ENCODE measurements at regions of chr6 and their contacts with region 1.

Region 1: DNA sequence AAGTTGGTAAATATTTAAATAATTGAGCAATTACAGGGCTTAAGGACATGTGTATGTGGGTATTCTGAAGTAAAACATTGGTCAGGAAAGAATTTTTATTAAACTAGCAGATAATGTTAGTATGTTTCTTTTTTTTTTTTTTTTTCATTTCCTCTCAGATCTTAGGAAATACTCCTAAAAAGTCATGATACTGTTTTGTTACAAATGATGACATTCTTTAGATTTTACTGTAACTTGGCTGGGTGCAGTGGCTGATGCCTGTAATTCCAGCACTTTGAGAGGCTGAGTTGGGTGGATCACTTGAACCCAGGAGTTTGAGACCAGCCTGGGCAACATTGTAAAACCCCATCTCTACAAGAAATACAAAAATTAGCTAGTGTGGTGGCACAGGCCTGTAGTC is 41.5 kb downstream of the CDC40 start:
- DNase-seq: peak; percentile 7
- ATAC-seq: peak; percentile 60
- H3K4me3 ChIP-seq: no peak overlapping the region
- H3K27ac ChIP-seq: peak overlapping the region; percentile 78
- H3K4me1 ChIP-seq: peaks cover 5% of the 10 kb centered on the region
- H3K27me3 ChIP-seq: no peaks in the 10 kb centered on the region
- CTCF ChIP-seq: no peak
- POLR2A ChIP-seq: no peak
- RAD21 ChIP-seq: no peak

Region 2: DNA sequence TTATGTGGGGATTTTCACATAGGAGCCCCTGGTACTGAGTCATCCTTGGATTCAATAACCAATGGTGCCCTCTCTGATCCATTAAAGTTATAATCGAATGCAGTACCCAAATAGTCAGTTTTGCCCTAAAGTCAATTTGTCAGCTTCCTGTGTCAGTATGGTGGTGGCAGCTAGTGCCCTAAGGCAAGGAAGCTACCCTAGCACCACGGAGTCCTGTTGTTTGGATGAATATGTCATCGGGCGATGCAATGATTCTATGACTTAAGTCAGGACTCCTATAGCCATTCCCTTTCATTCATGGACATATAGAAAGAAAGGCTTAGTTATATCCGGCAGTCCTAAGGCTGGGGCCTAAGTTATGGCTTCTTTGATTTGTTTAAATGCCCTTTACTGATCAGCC is 331.7 kb before region 1 on chr6:
- CTCF ChIA-PET with region 1: no interaction called
- POLR2A ChIA-PET with region 1: no interaction called
- dilution Hi-C with region 1: no loop called
- in situ Hi-C with region 1: no loop called
- intact Hi-C with region 1: no loop called
- DNase-seq: no peak
- ATAC-seq: no peak
- H3K4me3 ChIP-seq: no peak overlapping the region
- H3K27ac ChIP-seq: no peak overlapping the region
- H3K4me1 ChIP-seq: no peaks in the 10 kb centered on the region
- H3K27me3 ChIP-seq: peaks cover 4% of the 10 kb centered on the region
- CTCF ChIP-seq: no peak
- POLR2A ChIP-seq: no peak
- RAD21 ChIP-seq: no peak

Region 3: DNA sequence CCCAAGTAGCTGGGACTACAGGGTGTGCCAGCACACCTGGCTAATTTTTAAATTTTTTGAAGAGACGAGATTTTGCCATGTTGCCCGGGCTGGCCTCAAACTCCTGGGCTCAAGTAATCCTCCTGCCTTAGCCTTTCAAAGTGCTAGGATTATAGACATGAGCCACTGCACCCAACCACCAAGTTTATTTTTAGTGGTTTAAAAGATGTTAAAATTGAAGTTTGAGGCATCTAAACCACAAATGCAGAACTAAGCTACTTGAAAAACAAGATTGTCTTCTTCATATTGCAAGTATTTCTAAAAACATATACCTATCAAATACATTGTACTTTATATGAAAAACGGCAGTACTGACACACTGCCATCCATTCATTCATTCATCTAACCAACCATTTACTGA is 73.9 kb before region 1 on chr6:
- CTCF ChIA-PET with region 1: no interaction called
- POLR2A ChIA-PET with region 1: no interaction called
- dilution Hi-C with region 1: no loop called
- in situ Hi-C with region 1: no loop called
- intact Hi-C with region 1: no loop called
- DNase-seq: no peak
- ATAC-seq: no peak
- H3K4me3 ChIP-seq: no peak overlapping the region
- H3K27ac ChIP-seq: no peak overlapping the region
- H3K4me1 ChIP-seq: no peaks in the 10 kb centered on the region
- H3K27me3 ChIP-seq: no peaks in the 10 kb centered on the region
- CTCF ChIP-seq: no peak
- POLR2A ChIP-seq: no peak
- RAD21 ChIP-seq: no peak

Region 4: DNA sequence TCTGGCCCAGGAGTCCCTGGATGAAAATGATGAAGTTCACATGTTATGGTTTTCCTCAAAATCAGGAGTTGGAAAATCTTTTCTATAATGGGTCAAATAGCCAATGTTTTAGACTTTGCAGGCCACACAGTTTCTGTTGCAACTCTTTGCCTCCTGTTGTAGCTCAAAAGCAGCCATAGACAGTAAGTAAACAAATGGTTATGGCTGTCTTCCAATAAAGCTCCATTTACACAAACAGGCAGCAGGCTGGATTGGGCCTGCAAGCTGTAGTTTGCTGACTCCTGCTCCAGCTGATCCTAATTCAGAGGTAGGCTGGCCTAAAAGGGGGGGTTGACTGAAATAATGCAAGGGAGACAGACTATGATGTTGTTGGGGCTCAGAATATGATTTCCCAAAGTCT is 103.5 kb after region 1 on chr6:
- CTCF ChIA-PET with region 1: no interaction called
- POLR2A ChIA-PET with region 1: no interaction called
- dilution Hi-C with region 1: no loop called
- in situ Hi-C with region 1: no loop called
- intact Hi-C with region 1: loop called (anchors 5 kb)
- DNase-seq: peak; percentile 85
- ATAC-seq: peak; percentile 78
- H3K4me3 ChIP-seq: no peak overlapping the region
- H3K27ac ChIP-seq: peak overlapping the region; percentile 83; the same call in 1 of the 2 replicates
- H3K4me1 ChIP-seq: peaks cover 34% of the 10 kb centered on the region
- H3K27me3 ChIP-seq: no peaks in the 10 kb centered on the region
- CTCF ChIP-seq: no peak
- POLR2A ChIP-seq: no peak
- RAD21 ChIP-seq: no peak

Measured in IMR-90 (cell line).